Heart right ventricle (tissue), 16 donors: ENCODE measurements at regions of chr6 and their contacts with region 1.

Region 1: DNA sequence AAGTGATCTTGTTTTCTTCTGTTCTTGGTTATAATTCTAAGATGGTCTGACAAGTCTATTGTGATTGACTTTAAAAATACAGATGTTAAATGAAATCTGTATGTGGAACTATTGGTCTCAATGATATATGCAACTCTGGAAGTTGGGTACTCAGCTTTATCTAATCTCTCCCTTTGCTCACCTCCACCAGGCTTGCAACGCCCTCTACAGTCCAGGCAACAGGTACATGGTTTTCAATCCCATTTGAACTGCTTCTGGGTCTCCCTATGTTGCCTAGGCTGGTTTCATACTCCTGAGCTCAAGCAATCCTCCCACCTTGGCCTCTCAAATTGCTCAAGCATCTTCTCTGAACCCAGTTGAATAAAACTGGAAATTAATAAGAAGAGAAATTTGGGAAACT is 25.6 kb upstream of the HLA-DQB1 start:
- DNase-seq: peak in 1 of 2 donors; percentile 14
- ATAC-seq: no peak
- H3K4me3 ChIP-seq: no peak overlapping the region
- H3K27ac ChIP-seq: no peak overlapping the region
- H3K4me1 ChIP-seq: no peaks in the 10 kb centered on the region
- H3K27me3 ChIP-seq: peaks cover 0 to 42% (median 0%) of the 10 kb centered on the region in 7 donors
- CTCF ChIP-seq: peak in 5 of 9 donors; percentile 37 to 54 (median 45)

Region 2: GRCh38 chr6:32432050-32432450 is 260.0 kb before region 1 on chr6:
- intact Hi-C with region 1: loop called in 2 of 10 experiments (anchors 2 to 5 kb)
- DNase-seq: no peak
- ATAC-seq: no peak
- H3K4me3 ChIP-seq: no peak overlapping the region
- H3K27ac ChIP-seq: no peak overlapping the region
- H3K4me1 ChIP-seq: peaks cover 0 to 4% (median 0%) of the 10 kb centered on the region in 9 donors
- H3K27me3 ChIP-seq: peaks cover 0 to 8% (median 0%) of the 10 kb centered on the region in 7 donors
- CTCF ChIP-seq: peak in 8 of 9 donors; percentile 17 to 67 (median 60)

Region 3: GRCh38 chr6:32622545-32623401 is 69.2 kb before region 1 on chr6:
- intact Hi-C with region 1: loop called in 3 of 10 experiments (anchors 2 to 10 kb)
- DNase-seq: peak in 1 of 2 donors; percentile 22
- ATAC-seq: peak in 7 of 8 donors; percentile 67 to 94 (median 81)
- H3K4me3 ChIP-seq: no peak overlapping the region
- H3K27ac ChIP-seq: peak overlapping the region in 1 of 10 donors; percentile 77
- H3K4me1 ChIP-seq: peaks cover 0 to 18% (median 0%) of the 10 kb centered on the region in 9 donors
- H3K27me3 ChIP-seq: no peaks in the 10 kb centered on the region
- CTCF ChIP-seq: peak in 8 of 9 donors; percentile 15 to 67 (median 34)

Region 4: GRCh38 chr6:32868257-32868788 is 176.3 kb after region 1 on chr6:
- intact Hi-C with region 1: no loop called
- DNase-seq: peak; percentile 73 to 81
- ATAC-seq: peak in 7 of 8 donors; percentile 42 to 88 (median 79)
- H3K4me3 ChIP-seq: no peak overlapping the region
- H3K27ac ChIP-seq: no peak overlapping the region
- H3K4me1 ChIP-seq: peaks cover 0 to 16% (median 0%) of the 10 kb centered on the region in 9 donors
- H3K27me3 ChIP-seq: peaks cover 0 to 13% (median 0%) of the 10 kb centered on the region in 7 donors
- CTCF ChIP-seq: peak; percentile 87 to 97 (median 94)

Region 5: DNA sequence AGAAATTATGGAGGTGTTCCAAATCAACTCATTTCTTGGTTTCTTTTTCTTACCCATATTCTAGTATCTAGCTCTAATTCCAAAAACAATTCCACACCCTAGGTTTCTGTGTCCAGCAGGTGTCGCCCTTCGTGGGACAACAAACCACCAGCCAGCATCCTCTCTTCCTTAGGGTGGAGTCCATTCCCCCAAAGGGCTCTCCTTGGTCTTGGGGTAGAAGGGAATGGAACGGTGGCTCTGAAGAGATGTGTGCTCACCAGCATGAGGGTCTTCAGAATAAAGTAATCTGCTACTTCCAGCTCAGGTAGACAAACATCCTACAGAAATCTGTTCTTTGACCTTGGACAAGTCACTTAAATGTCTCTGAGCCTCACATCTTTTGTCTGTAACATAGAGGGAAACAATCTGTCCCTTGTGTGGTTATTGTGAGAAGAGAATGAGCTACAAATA is 241.6 kb after region 1 on chr6:
- intact Hi-C with region 1: no loop called
- DNase-seq: peak; percentile 72 to 83
- ATAC-seq: peak; percentile 50 to 77 (median 68)
- H3K4me3 ChIP-seq: no peak overlapping the region
- H3K27ac ChIP-seq: peak overlapping the region in 1 of 10 donors; percentile 5
- H3K4me1 ChIP-seq: peaks cover 0 to 46% (median 0%) of the 10 kb centered on the region in 9 donors
- H3K27me3 ChIP-seq: no peaks in the 10 kb centered on the region
- CTCF ChIP-seq: peak; percentile 72 to 92 (median 82)